ENCODE measurements at regions of chr21 and their contacts with region 1.

Region 1: GRCh38 chr21:36319765-36320420 is at the start of gene MORC3:
- DNase-seq: peak; percentile 99
- H3K4me3 ChIP-seq: peak within 1 kb of the TSS; percentile 85 to 96 (median 89)
- H3K27ac ChIP-seq: peak within 1 kb of the TSS; percentile 94 to 99 (median 98)
- H3K4me1 ChIP-seq: peaks cover 35 to 47% (median 44%) of the 10 kb centered on the region in 4 donors
- H3K27me3 ChIP-seq: no peaks in the 10 kb centered on the region
- CTCF ChIP-seq: peak in 2 of 3 experiments; percentile 7 to 10
- EP300 ChIP-seq: no peak
- POLR2A ChIP-seq: peak; percentile 74
- total RNA-seq, gene MORC3: 32.0 to 41.9 (median 39.2) TPM

Region 2: GRCh38 chr21:36079010-36079649 is 240.8 kb before region 1 on chr21:
- intact Hi-C with region 1: no loop called
- DNase-seq: no peak
- H3K4me3 ChIP-seq: no peak overlapping the region
- H3K27ac ChIP-seq: no peak overlapping the region
- H3K4me1 ChIP-seq: no peaks in the 10 kb centered on the region
- H3K27me3 ChIP-seq: no peaks in the 10 kb centered on the region
- CTCF ChIP-seq: no peak
- EP300 ChIP-seq: no peak
- POLR2A ChIP-seq: no peak

Region 3: DNA sequence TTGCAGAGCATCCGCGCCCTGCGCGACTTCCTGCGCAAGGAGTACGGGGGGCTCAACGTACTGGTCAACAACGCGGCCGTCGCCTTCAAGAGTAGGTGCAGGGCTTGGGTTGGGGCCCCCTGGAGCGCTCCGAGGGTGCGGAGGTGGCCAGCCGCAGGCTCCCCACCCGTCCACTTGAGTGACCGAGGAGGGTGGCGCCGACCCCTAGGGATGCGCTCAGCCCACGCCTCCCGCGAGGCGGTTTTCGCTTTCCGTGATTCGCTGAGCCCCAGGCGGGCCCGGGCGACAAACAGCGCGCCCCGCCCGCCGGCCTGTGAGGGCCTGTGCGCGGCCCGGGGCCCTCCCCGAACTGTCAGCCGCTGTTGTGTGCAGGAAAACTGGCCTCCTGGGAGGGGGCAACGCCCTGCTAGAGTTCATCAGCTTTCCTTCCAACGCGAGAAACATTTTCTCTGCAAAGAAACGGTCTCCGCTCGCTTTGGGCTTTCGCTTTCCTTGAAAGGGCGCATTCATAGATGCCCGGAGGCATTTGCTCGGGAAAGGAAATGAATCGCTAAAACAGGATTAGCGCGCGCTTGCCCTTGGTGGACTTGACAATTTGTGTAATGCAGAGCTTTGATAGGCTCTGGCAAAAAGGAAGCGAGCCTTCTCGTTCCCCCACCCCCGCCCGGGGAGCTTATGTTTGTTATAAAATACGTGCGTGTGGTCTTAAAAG is 184.3 kb before region 1 on chr21:
- intact Hi-C with region 1: loop called (anchors 5 kb)
- DNase-seq: peak; percentile 95
- H3K4me3 ChIP-seq: peak overlapping the region; percentile 72 to 84 (median 81)
- H3K27ac ChIP-seq: peak overlapping the region; percentile 90 to 96 (median 92)
- H3K4me1 ChIP-seq: peaks cover 24 to 34% (median 31%) of the 10 kb centered on the region in 4 donors
- H3K27me3 ChIP-seq: no peaks in the 10 kb centered on the region
- CTCF ChIP-seq: no peak
- EP300 ChIP-seq: no peak
- POLR2A ChIP-seq: peak; percentile 42

Region 4: GRCh38 chr21:36156339-36156814 is 163.5 kb before region 1 on chr21:
- intact Hi-C with region 1: loop called (anchors 5 kb)
- DNase-seq: peak; percentile 100
- H3K4me3 ChIP-seq: peak overlapping the region; percentile 89 to 99 (median 98)
- H3K27ac ChIP-seq: peak overlapping the region; percentile 82 to 90 (median 86)
- H3K4me1 ChIP-seq: peaks cover 7 to 22% (median 20%) of the 10 kb centered on the region in 4 donors
- H3K27me3 ChIP-seq: no peaks in the 10 kb centered on the region
- CTCF ChIP-seq: no peak
- EP300 ChIP-seq: no peak
- POLR2A ChIP-seq: no peak

Region 5: GRCh38 chr21:36260030-36260787 is 59.7 kb before region 1 on chr21:
- intact Hi-C with region 1: loop called (anchors 5 kb)
- DNase-seq: no peak
- H3K4me3 ChIP-seq: peak overlapping the region; percentile 42 to 62 (median 58)
- H3K27ac ChIP-seq: peak overlapping the region; percentile 72 to 77 (median 74)
- H3K4me1 ChIP-seq: peaks cover 4 to 11% (median 8%) of the 10 kb centered on the region in 4 donors
- H3K27me3 ChIP-seq: no peaks in the 10 kb centered on the region
- CTCF ChIP-seq: peak; percentile 71 to 82 (median 72)
- EP300 ChIP-seq: no peak
- POLR2A ChIP-seq: no peak